ENCODE measurements at regions of chr11 and their contacts with region 1.

Region 1: DNA sequence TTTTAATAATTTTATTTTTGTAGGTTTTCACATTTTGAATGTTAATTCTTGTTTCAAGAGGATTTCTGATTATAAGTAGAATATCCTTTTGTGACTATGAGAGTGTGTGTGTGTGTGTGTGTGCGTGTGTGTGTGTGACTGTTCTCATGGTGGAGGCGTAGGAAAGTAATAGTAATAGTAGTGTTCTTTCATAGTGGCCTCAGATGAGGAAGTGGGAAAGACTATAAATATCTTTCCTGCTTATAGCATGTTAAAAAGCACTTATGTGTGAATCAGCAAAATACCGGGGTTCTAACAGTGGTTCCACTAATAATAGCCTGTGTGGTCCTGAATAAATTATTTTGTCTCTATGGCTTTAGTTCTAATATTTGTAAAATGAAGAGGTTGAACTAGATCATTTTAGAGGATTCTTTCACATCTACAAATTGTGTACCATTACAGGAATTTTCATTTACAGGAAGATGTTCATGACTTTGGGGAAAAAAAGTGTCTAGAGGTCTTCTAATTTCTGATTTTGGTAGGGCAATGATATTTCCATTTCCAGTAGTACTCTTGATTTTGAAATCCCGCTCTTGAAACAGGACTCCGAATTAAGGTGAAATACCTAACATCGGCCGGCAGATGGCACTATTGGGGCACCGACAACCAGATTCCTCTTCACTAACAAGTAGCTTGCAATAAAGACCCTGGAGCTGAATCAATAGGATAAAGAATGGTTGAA is 29.9 kb upstream of the OR10G7 start:
- DNase-seq: peak; percentile 88
- H3K4me3 ChIP-seq: no peak overlapping the region
- H3K27ac ChIP-seq: no peak overlapping the region
- H3K4me1 ChIP-seq: peaks cover 4% of the 10 kb centered on the region
- H3K27me3 ChIP-seq: peaks cover 15 to 33% of the 10 kb centered on the region in 2 experiments
- CTCF ChIP-seq: peak; percentile 56 to 57
- POLR2A ChIP-seq: no peak

Region 2: DNA sequence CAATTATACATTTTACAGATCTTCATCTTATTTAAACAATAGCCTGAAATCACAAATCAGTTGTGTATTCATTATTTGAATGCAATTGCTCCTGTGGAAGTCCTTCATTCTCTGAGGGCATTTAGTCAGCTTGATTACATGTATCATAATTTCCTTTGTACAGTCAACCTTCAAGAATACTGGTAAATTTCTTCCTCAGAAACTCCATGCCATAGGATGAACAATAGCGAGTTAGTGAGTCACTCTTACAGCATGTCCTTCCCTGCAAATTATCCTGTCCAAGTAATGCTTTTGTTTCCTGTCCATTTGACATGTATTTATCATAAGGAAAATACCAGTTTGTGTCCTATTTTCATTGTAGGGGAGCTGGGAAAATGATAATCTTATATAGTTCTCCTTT is 97.3 kb before region 1 on chr11:
- CTCF ChIA-PET with region 1: interaction called, 8 read pairs
- POLR2A ChIA-PET with region 1: no interaction called
- dilution Hi-C with region 1: no loop called
- intact Hi-C with region 1: loop called (anchors 5 kb)
- DNase-seq: peak; percentile 96
- H3K4me3 ChIP-seq: no peak overlapping the region
- H3K27ac ChIP-seq: peak overlapping the region; percentile 93
- H3K4me1 ChIP-seq: peaks cover 24% of the 10 kb centered on the region
- H3K27me3 ChIP-seq: no peaks in the 10 kb centered on the region
- CTCF ChIP-seq: no peak
- POLR2A ChIP-seq: peak; percentile 54

Region 3: DNA sequence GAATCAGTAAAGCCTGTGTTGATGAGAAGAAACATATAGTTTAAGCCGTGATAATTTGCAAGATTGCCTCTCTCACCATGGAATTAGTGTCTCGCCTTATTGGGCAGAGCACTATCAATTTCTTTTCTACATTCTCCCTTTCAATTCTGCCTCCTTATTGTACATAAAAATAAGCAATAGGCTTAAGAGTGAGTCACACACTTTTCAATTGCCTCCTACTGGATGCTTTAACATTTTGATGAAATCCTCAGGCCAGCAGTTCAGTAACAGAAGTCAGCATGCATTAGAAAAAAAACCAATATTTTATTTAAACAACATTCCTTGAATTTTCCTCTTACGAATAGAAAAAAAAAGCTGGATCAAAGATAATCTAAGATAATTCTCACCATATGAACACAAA is 10.4 kb after region 1 on chr11:
- CTCF ChIA-PET with region 1: interaction called, 21 read pairs
- POLR2A ChIA-PET with region 1: no interaction called
- dilution Hi-C with region 1: no loop called
- intact Hi-C with region 1: no loop called
- DNase-seq: no peak
- H3K4me3 ChIP-seq: no peak overlapping the region
- H3K27ac ChIP-seq: no peak overlapping the region
- H3K4me1 ChIP-seq: peaks cover under 1% of the 10 kb centered on the region
- H3K27me3 ChIP-seq: peaks cover 7 to 14% of the 10 kb centered on the region in 2 experiments
- CTCF ChIP-seq: no peak
- POLR2A ChIP-seq: no peak

Region 4: GRCh38 chr11:124174001-124174583 is 103.0 kb after region 1 on chr11:
- CTCF ChIA-PET with region 1: interaction called, 23 read pairs
- POLR2A ChIA-PET with region 1: no interaction called
- dilution Hi-C with region 1: no loop called
- intact Hi-C with region 1: no loop called
- DNase-seq: peak; percentile 83
- H3K4me3 ChIP-seq: no peak overlapping the region
- H3K27ac ChIP-seq: no peak overlapping the region
- H3K4me1 ChIP-seq: peaks cover 5% of the 10 kb centered on the region
- H3K27me3 ChIP-seq: no peaks in the 10 kb centered on the region
- CTCF ChIP-seq: no peak
- POLR2A ChIP-seq: no peak

Region 5: GRCh38 chr11:124277804-124278203 is 206.7 kb after region 1 on chr11:
- CTCF ChIA-PET with region 1: interaction called, 16 read pairs
- POLR2A ChIA-PET with region 1: no interaction called
- dilution Hi-C with region 1: no loop called
- intact Hi-C with region 1: loop called (anchors 2 kb)
- DNase-seq: no peak
- H3K4me3 ChIP-seq: no peak overlapping the region
- H3K27ac ChIP-seq: no peak overlapping the region
- H3K4me1 ChIP-seq: peaks cover 15% of the 10 kb centered on the region
- H3K27me3 ChIP-seq: no peaks in the 10 kb centered on the region
- CTCF ChIP-seq: peak in 1 of 2 donors; percentile 2
- POLR2A ChIP-seq: no peak

Region 6: DNA sequence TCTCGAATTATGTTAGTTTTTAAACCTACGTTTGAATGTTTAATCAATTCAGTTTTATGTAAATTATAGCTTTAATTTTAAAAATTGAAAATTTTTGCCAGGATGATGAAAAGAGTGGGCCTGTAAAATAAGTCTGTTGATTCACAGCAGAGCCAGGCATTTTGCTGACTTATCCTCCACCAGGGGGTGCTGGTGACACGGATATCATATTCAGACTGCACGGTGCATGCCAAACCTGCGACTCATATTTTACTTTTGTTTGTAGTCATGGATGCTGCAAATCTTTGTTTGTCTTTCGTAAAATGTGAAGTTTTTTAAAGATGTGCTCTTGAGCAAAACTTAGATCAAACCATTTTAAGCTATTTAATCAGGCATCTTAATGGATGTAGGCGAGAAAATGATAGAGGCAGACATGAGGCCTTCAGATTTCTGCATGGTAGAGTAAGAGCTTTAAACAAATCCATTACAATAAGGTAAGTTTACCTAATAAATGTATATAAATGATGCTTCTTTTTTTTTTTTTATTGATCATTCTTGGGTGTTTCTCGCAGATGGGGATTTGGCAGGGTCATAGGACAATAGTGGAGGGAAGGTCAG is 331.3 kb after region 1 on chr11:
- CTCF ChIA-PET with region 1: interaction called, 6 read pairs
- POLR2A ChIA-PET with region 1: no interaction called
- dilution Hi-C with region 1: no loop called
- intact Hi-C with region 1: loop called (anchors 2 kb)
- DNase-seq: peak; percentile 67
- H3K4me3 ChIP-seq: no peak overlapping the region
- H3K27ac ChIP-seq: no peak overlapping the region
- H3K4me1 ChIP-seq: no peaks in the 10 kb centered on the region
- H3K27me3 ChIP-seq: peaks cover 2 to 10% of the 10 kb centered on the region in 2 experiments
- CTCF ChIP-seq: peak; percentile 80
- POLR2A ChIP-seq: no peak